Activated B cell treated with CpG ODN at 0.5 μM for 24 hours (primary cell): ENCODE measurements at regions of chr6 and their contacts with region 1.

Region 1: DNA sequence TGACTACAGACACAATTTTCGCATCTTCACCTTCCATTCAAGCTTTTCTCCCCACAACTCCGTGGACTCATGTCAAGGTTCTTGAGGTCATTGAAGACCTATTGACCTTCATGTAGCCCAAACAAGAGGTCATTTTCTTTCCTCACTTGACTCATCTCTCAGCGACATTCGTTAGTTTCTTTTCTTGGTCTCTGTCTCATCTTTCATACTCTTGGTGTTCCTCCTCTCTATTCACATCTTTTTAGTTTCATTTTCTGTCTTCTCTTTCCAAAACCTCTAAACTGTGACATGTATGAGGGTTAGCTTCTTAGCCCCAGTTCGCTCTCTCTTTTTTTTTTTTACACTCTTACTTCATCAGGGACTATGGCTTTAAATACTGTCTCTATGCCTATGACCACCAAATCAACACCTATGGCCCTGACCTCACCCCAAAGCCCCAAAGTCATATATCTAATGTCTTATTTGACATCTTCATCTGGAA is 128.6 kb upstream of the BACH2 start:
- DNase-seq: no peak
- ATAC-seq: peak; percentile 90
- H3K4me3 Mint-ChIP-seq: peak overlapping the region; percentile 71
- H3K27ac Mint-ChIP-seq: peak overlapping the region; percentile 62
- H3K4me1 Mint-ChIP-seq: peaks cover 19% of the 10 kb centered on the region
- H3K27me3 Mint-ChIP-seq: no peaks in the 10 kb centered on the region
- CTCF ChIP-seq: no peak

Region 2: DNA sequence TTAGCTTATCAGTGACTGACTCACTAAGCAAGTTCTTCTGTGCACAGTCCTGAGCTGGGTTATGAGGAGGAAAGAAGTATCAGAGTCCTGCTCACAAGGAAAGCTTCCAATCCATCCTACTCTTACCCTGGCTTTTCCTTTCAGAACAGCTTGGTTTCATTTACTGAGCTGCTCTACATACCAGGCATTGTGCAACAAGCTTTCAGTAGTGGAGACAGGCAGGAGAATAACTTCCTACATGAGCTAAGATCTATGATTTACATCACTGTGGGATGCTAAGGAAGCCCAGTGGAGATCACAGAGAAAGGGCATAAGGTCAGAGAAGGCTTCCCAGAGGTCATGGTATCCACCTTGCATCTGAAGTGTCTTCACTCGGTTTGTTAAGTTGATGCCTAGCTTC is 17.2 kb after region 1 on chr6:
- CTCF ChIA-PET with region 1: no interaction called
- POLR2A ChIA-PET with region 1: interaction called, 8 read pairs
- intact Hi-C with region 1: loop called (anchors 2 kb)
- DNase-seq: no peak
- ATAC-seq: no peak
- H3K4me3 Mint-ChIP-seq: no peak overlapping the region
- H3K27ac Mint-ChIP-seq: no peak overlapping the region
- H3K4me1 Mint-ChIP-seq: no peaks in the 10 kb centered on the region
- H3K27me3 Mint-ChIP-seq: no peaks in the 10 kb centered on the region
- CTCF ChIP-seq: no peak

Region 3: GRCh38 chr6:90753820-90754643 is 328.8 kb after region 1 on chr6:
- CTCF ChIA-PET with region 1: no interaction called
- POLR2A ChIA-PET with region 1: no interaction called
- intact Hi-C with region 1: no loop called
- DNase-seq: no peak
- ATAC-seq: no peak
- H3K4me3 Mint-ChIP-seq: no peak overlapping the region
- H3K27ac Mint-ChIP-seq: no peak overlapping the region
- H3K4me1 Mint-ChIP-seq: no peaks in the 10 kb centered on the region
- H3K27me3 Mint-ChIP-seq: peaks cover 2% of the 10 kb centered on the region
- CTCF ChIP-seq: no peak